Posterior cingulate gyrus (tissue), 11 donors: ENCODE measurements at regions of chr20 and their contacts with region 1.

Region 1: DNA sequence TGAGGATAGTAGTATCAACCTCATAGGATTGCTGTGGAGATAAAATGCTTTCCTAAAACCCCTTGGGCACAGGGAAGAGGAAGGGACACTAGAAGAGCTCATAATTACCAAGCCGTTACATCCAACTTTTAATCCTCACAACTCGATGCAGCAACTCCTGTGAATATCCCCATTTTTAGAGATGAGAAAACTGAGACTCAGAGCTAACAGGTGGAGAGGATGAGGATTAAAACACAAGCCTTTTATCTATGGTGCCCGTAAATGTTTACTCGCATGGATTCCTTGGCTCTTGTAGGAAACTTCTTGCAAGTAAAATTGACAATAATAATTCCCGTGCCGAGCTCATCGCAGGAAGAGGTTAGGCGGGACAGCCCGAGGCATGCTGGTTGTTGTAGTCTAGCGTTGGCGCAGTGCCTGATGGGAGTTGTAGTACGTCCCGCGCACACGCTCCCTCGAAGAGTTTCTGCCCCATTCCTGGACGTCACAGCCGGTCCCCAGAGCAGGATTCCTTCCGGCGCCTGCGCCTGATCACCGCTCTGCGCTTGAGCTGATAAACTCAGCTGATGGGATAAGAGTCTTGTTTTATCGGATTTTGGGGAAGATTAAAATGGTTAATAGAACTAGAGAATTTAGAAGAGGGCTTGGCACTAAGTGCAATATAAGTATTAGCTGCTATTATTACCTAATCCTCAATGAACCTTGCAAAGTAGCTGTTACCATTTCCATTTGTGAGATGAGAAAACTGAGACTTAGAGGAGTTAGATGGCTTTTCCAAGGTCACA is 2.8 kb upstream of the UBE2V1 start:
- DNase-seq: peak; percentile 95 to 100 (median 98)

Region 2: GRCh38 chr20:50153485-50154377 is 37.9 kb after region 1 on chr20 and contains the start of gene PEDS1:
- intact Hi-C with region 1: loop called (anchors 5 kb)
- DNase-seq: peak; percentile 83 to 99 (median 90)

Region 3: GRCh38 chr20:50267041-50267865 is 151.5 kb after region 1 on chr20:
- intact Hi-C with region 1: no loop called
- DNase-seq: peak in 1 of 10 donors; percentile 79